SK-N-SH (cell line): ENCODE measurements at regions of chr9 and their contacts with region 1.

Region 1: DNA sequence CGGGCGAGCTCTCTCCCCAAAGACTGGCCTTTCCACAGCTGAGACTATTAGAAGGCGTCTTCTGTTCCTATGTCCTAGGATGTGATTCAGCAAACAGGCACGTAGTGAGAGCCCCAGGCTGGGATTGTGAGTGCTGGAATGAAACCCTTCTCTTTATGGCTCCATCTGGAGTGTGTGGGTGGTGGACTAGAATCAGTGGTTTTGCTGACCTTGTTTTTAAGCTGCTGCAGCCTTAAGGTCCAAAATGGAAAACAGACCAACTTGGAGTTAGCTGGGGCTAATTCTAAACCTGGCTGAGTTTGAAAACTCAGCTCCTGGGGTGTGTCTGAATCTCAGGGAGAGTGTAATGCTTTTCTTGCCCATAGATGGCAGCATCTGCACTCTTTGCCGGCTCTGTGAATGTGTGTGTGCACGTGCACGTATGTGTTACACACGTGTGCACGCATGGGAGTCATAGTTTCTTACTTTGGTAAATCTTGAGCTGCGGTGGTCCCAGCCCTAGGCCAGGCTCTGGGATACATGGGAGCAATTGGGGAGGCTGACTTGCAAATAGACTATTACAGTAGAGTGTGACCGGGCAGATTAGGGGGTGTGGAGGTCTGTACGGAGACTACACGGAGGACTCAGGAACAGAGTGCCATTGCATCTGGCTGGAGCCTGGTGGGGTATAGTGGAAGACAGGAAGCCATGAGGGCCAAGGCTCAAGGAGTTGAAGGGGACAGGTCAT is 10.7 kb downstream of the GSN start:
- DNase-seq: peak; percentile 59
- H3K4me3 ChIP-seq: peak overlapping the region in 1 of 2 experiments; percentile 40; a peak in 2 of 4 replicates
- H3K27ac ChIP-seq: peak overlapping the region; percentile 90 to 95
- H3K4me1 ChIP-seq: peaks cover 33 to 75% of the 10 kb centered on the region in 2 experiments
- H3K27me3 ChIP-seq: no peaks in the 10 kb centered on the region
- CTCF ChIP-seq: peak; percentile 86
- EP300 ChIP-seq: peak; percentile 29 to 74; a peak in 1 of 4 replicates
- RAD21 ChIP-seq: peak; percentile 61

Region 2: GRCh38 chr9:121267689-121268597 is 10.8 kb before region 1 on chr9 and contains the start of gene GSN:
- CTCF ChIA-PET with region 1: interaction called, 46 read pairs
- POLR2A ChIA-PET with region 1: interaction called, 5 read pairs
- DNase-seq: peak; percentile 95
- H3K4me3 ChIP-seq: peak within 1 kb of the TSS; percentile 72 to 92
- H3K27ac ChIP-seq: peak within 1 kb of the TSS; percentile 47 to 71; a peak in 3 of 4 replicates
- H3K4me1 ChIP-seq: peaks cover 18 to 37% of the 10 kb centered on the region in 2 experiments; a peak in 3 of 4 replicates
- H3K27me3 ChIP-seq: no peaks in the 10 kb centered on the region
- CTCF ChIP-seq: peak; percentile 21; the same call in 1 of the 2 replicates
- EP300 ChIP-seq: no peak
- RAD21 ChIP-seq: no peak
- polyA plus RNA-seq, gene GSN: 168 and 172 TPM in 2 replicates

Region 3: GRCh38 chr9:121299467-121300234 is 21.0 kb after region 1 on chr9:
- CTCF ChIA-PET with region 1: interaction called, 20 read pairs
- POLR2A ChIA-PET with region 1: no interaction called
- DNase-seq: peak; percentile 85
- H3K4me3 ChIP-seq: peak overlapping the region; percentile 47 to 50
- H3K27ac ChIP-seq: no peak overlapping the region
- H3K4me1 ChIP-seq: peaks cover 0 to 19% of the 10 kb centered on the region in 2 experiments; a peak in 2 of 4 replicates
- H3K27me3 ChIP-seq: no peaks in the 10 kb centered on the region
- CTCF ChIP-seq: no peak
- EP300 ChIP-seq: no peak
- RAD21 ChIP-seq: no peak